CD4-positive, alpha-beta memory T cell (primary cell): ENCODE measurements at regions of chrX and their contacts with region 1.

Region 1: GRCh38 chrX:133792198-133792953 is 193.0 kb downstream of the GPC3 start:
- DNase-seq: peak; percentile 42 to 64 (median 59)
- H3K4me3 ChIP-seq: no peak overlapping the region
- H3K4me3 Mint-ChIP-seq: no peak overlapping the region
- H3K27ac ChIP-seq: no peak overlapping the region
- H3K27ac Mint-ChIP-seq: no peak overlapping the region
- H3K4me1 ChIP-seq: no peaks in the 10 kb centered on the region
- H3K4me1 Mint-ChIP-seq: no peaks in the 10 kb centered on the region
- H3K27me3 ChIP-seq: no peaks in the 10 kb centered on the region
- H3K27me3 Mint-ChIP-seq: no peaks in the 10 kb centered on the region

Region 2: DNA sequence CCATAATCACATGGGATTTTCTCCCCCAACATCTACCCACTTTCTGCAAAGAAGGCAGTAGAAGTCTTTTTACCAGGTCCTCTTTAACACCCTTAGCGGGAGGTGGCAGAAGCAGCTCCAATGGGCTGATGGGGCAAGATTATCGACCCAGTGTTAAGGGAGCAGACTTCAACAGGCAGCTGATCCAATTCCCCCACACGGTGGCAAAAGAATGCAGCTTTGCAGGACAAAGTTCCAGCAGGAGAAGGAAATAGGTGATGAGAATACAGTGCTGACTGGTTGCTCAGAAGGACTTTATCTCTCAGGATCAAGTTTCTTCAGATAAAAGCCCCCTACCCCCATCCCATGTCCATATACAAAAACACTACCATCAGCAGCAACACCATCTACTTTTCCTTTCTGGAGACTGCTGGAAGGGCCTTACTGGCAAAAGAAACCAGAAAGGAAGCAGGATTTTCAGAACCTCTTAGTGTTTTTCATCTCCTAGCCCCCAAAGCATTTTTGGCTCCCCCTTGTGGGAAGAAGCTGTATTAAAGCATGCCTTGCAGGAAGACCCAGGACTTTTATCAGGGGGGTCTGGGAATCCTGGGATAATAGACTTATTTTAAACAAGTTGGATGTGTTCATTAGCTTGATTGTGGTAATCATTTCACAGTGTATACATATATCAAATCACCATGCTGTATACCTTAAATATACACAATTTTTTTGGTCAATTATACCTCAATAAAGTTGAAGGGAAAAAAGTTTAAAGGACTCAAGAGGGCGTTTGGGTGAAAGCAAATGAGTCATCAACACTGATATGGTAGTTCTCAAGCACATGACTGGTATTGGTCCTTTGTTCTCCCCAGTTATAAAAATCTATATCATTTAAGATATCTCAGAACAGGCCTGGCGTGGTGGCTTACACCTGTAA is 46.6 kb after region 1 on chrX:
- CTCF ChIA-PET with region 1: interaction called, 3 read pairs
- POLR2A ChIA-PET with region 1: no interaction called
- intact Hi-C with region 1: loop called (anchors 2 kb)
- DNase-seq: peak in 4 of 5 donors; percentile 5 to 25 (median 17)
- H3K4me3 ChIP-seq: no peak overlapping the region
- H3K4me3 Mint-ChIP-seq: no peak overlapping the region
- H3K27ac ChIP-seq: no peak overlapping the region
- H3K27ac Mint-ChIP-seq: no peak overlapping the region
- H3K4me1 ChIP-seq: no peaks in the 10 kb centered on the region
- H3K4me1 Mint-ChIP-seq: no peaks in the 10 kb centered on the region
- H3K27me3 ChIP-seq: no peaks in the 10 kb centered on the region
- H3K27me3 Mint-ChIP-seq: no peaks in the 10 kb centered on the region

Region 3: GRCh38 chrX:134026565-134027311 is 234.4 kb after region 1 on chrX:
- CTCF ChIA-PET with region 1: interaction called, 11 read pairs
- POLR2A ChIA-PET with region 1: no interaction called
- intact Hi-C with region 1: loop called (anchors 1 kb)
- DNase-seq: peak in 2 of 5 donors; percentile 10 to 18
- H3K4me3 ChIP-seq: no peak overlapping the region
- H3K4me3 Mint-ChIP-seq: peak overlapping the region in 5 of 8 donors; percentile 4 to 47 (median 15)
- H3K27ac ChIP-seq: no peak overlapping the region
- H3K27ac Mint-ChIP-seq: no peak overlapping the region
- H3K4me1 ChIP-seq: no peaks in the 10 kb centered on the region
- H3K4me1 Mint-ChIP-seq: peaks cover 0 to 8% (median 1%) of the 10 kb centered on the region in 4 donors
- H3K27me3 ChIP-seq: no peaks in the 10 kb centered on the region
- H3K27me3 Mint-ChIP-seq: peaks cover 0 to 3% of the 10 kb centered on the region in 2 donors

Region 4: GRCh38 chrX:134144231-134144630 is 351.9 kb after region 1 on chrX:
- CTCF ChIA-PET with region 1: interaction called, 4 read pairs
- POLR2A ChIA-PET with region 1: no interaction called
- intact Hi-C with region 1: loop called (anchors 2 kb)
- DNase-seq: peak in 2 of 5 donors; percentile 1 to 16
- H3K4me3 ChIP-seq: no peak overlapping the region
- H3K4me3 Mint-ChIP-seq: no peak overlapping the region
- H3K27ac ChIP-seq: no peak overlapping the region
- H3K27ac Mint-ChIP-seq: no peak overlapping the region
- H3K4me1 ChIP-seq: no peaks in the 10 kb centered on the region
- H3K4me1 Mint-ChIP-seq: peaks cover 0 to 5% (median 0%) of the 10 kb centered on the region in 4 donors
- H3K27me3 ChIP-seq: no peaks in the 10 kb centered on the region
- H3K27me3 Mint-ChIP-seq: peaks cover 0 to 3% of the 10 kb centered on the region in 2 donors

Region 5: DNA sequence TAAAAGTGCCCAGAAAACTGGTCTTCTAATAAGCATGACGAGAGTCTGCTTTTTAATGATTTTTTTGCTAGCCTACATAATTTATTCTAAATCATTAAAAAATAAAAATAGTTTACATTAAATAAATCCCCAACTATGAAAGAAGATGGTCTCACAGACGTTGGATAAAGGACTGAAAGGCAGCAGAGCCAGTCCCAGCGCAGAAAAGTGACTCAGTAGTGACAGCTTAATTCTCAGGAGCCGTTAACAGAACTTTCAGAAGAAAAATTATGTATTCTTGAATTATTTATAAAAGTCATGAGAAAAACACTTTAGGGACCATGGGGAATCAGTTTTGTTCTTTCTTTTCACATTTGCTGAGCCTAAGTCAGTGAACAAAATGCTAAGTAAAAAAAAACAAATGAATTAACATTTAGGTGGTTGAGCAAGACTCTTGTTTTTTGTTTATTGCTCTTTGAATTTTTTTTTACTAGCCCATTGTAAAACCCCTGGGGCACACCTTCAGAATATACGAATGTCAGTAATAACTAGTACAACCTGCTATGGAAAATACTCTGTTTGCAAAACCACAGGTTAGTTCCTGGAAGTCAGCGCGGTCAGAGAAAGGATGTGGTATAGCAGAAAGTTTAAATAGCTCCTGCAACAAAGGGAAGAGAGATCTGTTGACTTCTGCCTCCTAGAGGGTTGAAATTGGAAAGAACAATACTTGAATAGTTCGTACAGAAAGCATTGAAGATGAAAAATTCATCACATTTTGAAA is 394.2 kb after region 1 on chrX:
- CTCF ChIA-PET with region 1: interaction called, 8 read pairs
- POLR2A ChIA-PET with region 1: no interaction called
- intact Hi-C with region 1: loop called (anchors 2 kb)
- DNase-seq: peak; percentile 71 to 84 (median 76)
- H3K4me3 ChIP-seq: peak overlapping the region in 1 of 2 donors; percentile 19
- H3K4me3 Mint-ChIP-seq: peak overlapping the region in 7 of 8 donors; percentile 14 to 78 (median 76)
- H3K27ac ChIP-seq: no peak overlapping the region
- H3K27ac Mint-ChIP-seq: peak overlapping the region in 2 of 7 donors; percentile 44 to 64
- H3K4me1 ChIP-seq: peaks cover 31% of the 10 kb centered on the region
- H3K4me1 Mint-ChIP-seq: peaks cover 13 to 26% (median 24%) of the 10 kb centered on the region in 4 donors
- H3K27me3 ChIP-seq: no peaks in the 10 kb centered on the region
- H3K27me3 Mint-ChIP-seq: peaks cover 0 to 3% of the 10 kb centered on the region in 2 donors

Region 6: DNA sequence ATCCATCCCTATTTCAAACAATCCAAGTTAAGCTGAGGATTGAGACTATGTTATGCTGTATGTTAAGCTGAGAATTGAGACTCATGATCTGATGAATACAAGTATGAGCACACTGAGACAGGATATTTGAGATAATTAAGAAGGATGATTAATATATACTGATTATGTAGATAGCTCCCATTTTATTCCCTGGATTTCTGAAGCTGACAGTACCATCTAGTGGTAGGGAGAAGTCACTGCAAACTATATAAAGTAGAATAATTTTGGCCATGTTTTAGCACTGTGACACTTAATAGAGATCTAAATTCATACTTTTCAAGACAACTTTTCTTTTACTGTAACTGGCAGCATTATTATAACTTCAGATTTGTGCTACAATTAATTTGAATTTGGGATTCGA is 603.8 kb after region 1 on chrX:
- CTCF ChIA-PET with region 1: interaction called, 14 read pairs
- POLR2A ChIA-PET with region 1: no interaction called
- intact Hi-C with region 1: no loop called
- DNase-seq: peak in 2 of 5 donors; percentile 7 to 13
- H3K4me3 ChIP-seq: no peak overlapping the region
- H3K4me3 Mint-ChIP-seq: no peak overlapping the region
- H3K27ac ChIP-seq: no peak overlapping the region
- H3K27ac Mint-ChIP-seq: no peak overlapping the region
- H3K4me1 ChIP-seq: no peaks in the 10 kb centered on the region
- H3K4me1 Mint-ChIP-seq: peaks cover 0 to 6% (median 3%) of the 10 kb centered on the region in 4 donors
- H3K27me3 ChIP-seq: no peaks in the 10 kb centered on the region
- H3K27me3 Mint-ChIP-seq: no peaks in the 10 kb centered on the region